ENCODE measurements at regions of chr6 and their contacts with region 1.

Region 1: GRCh38 chr6:10720265-10720959 is 2.5 kb upstream of the TMEM14C start:
- DNase-seq: peak; percentile 77
- ATAC-seq: peak; percentile 57
- H3K4me3 Mint-ChIP-seq: peak overlapping the region; percentile 79
- H3K27ac Mint-ChIP-seq: peak overlapping the region; percentile 87
- H3K4me1 Mint-ChIP-seq: peaks cover 50% of the 10 kb centered on the region
- H3K27me3 Mint-ChIP-seq: no peaks in the 10 kb centered on the region

Region 2: GRCh38 chr6:10694302-10695085 is 25.9 kb before region 1 on chr6 and contains the starts of genes C6orf52 and PAK1IP1:
- CTCF ChIA-PET with region 1: interaction called, 13 read pairs
- DNase-seq: peak; percentile 96
- ATAC-seq: peak; percentile 95
- H3K4me3 Mint-ChIP-seq: peak within 1 kb of the TSS; percentile 93
- H3K27ac Mint-ChIP-seq: peak within 1 kb of the TSS; percentile 100
- H3K4me1 Mint-ChIP-seq: peaks cover 41% of the 10 kb centered on the region
- H3K27me3 Mint-ChIP-seq: no peaks in the 10 kb centered on the region
- total RNA-seq, gene C6orf52: 2.5 to 2.7 TPM
- total RNA-seq, gene PAK1IP1: 13.1 to 22.8 TPM

Measured in activated CD8-positive, alpha-beta memory T cell treated with anti-CD3 and anti-CD28 coated beads, Interleukin-2, amount 10 ng/mL, durations not matched to agents 7 days and 5 days (primary cell).